PC-3 (cell line): ENCODE measurements at regions of chr17 and their contacts with region 1.

Region 1: DNA sequence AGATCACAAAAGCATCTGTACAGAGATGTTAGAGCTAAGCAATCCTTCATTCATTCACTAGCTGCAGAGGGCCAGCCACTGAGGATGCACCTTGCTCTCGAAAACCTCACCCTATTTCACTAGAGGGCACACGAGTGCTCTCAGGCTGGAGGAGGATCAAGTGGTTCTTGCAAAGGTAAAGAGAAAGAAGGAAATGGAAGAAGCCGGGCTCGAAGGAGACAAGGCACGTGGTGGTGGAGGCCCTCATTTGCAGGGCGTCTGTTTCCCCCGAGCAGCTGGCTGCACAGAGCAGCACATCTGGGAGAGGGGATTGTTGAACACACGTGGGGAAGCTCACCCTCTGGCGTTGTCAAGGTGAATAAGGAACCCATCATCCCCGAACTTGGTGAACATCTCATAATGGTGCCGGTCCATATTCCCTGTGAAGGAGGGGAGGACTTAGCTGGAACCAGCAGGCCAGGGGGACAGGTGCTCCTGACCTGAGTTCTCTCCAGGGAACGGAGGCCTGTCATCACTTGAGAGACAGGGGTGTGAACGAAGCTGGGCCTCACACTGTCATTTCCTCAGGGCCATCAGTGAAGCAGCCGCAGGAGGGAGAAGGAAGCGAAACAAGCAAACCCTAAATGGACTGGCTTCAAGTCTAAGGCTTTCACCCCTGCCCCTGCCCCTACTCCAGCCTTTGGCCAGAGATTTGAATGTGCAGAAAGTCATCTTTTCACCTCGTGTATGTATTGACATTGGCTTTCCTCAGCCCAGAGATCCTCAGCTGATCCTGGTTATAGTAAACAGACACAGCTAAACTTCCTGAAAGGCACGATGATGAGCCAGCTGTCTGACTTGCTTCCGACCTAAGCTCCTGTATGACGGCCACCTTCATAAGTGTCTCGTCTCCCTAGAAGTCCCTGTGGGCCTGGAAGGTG is 27.6 kb downstream of the PRKAR1A start:
- DNase-seq: peak; percentile 19
- ATAC-seq: no peak
- H3K4me3 ChIP-seq: no peak overlapping the region
- H3K27ac ChIP-seq: no peak overlapping the region
- H3K4me1 ChIP-seq: peaks cover 38% of the 10 kb centered on the region
- H3K27me3 ChIP-seq: no peaks in the 10 kb centered on the region
- CTCF ChIP-seq: peak; percentile 52

Region 2: GRCh38 chr17:67121316-67121887 is 1418.4 kb before region 1 on chr17:
- CTCF ChIA-PET with region 1: no interaction called
- POLR2A ChIA-PET with region 1: no interaction called
- intact Hi-C with region 1: no loop called
- DNase-seq: no peak
- ATAC-seq: no peak
- H3K4me3 ChIP-seq: no peak overlapping the region
- H3K27ac ChIP-seq: no peak overlapping the region
- H3K4me1 ChIP-seq: no peaks in the 10 kb centered on the region
- H3K27me3 ChIP-seq: no peaks in the 10 kb centered on the region
- CTCF ChIP-seq: no peak

Region 3: DNA sequence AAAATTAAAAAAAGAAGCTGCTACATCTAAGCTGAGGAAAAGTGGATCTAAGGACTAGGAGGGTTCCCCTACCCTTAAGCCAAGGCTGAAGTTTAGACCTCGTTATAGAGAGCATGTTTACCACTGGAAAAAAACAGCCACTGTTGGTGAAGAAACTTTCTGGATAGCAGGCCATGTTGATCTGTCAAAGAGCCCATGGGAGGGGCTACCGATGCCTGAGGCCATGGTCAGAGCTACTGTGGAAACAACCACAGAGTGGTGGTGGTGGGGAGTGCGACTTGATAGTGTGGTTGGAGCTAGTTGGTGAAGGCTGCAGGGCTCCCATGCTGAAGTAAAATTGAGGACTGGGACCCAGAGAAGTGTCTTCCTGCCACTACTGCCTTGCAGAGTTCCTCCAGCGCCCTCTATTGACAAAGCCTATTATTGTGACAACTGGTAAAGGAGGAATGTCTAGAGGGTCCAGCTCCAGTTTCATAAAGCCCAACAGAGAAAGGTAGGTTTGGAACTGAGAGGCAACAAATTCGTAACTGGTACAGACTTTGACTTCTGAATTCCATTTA is 74.0 kb after region 1 on chr17:
- CTCF ChIA-PET with region 1: interaction called, 4 read pairs
- POLR2A ChIA-PET with region 1: no interaction called
- intact Hi-C with region 1: loop called (anchors 2 kb)
- DNase-seq: peak; percentile 91
- ATAC-seq: peak; percentile 20; the same call in 1 of the 2 replicates
- H3K4me3 ChIP-seq: no peak overlapping the region
- H3K27ac ChIP-seq: no peak overlapping the region
- H3K4me1 ChIP-seq: peaks cover 26% of the 10 kb centered on the region
- H3K27me3 ChIP-seq: no peaks in the 10 kb centered on the region
- CTCF ChIP-seq: peak; percentile 93

Region 4: GRCh38 chr17:68634403-68634802 is 94.6 kb after region 1 on chr17:
- CTCF ChIA-PET with region 1: no interaction called
- POLR2A ChIA-PET with region 1: no interaction called
- intact Hi-C with region 1: loop called (anchors 5 kb)
- DNase-seq: peak; percentile 74
- ATAC-seq: peak; percentile 89
- H3K4me3 ChIP-seq: no peak overlapping the region
- H3K27ac ChIP-seq: peak overlapping the region; percentile 62
- H3K4me1 ChIP-seq: peaks cover 10% of the 10 kb centered on the region
- H3K27me3 ChIP-seq: no peaks in the 10 kb centered on the region
- CTCF ChIP-seq: peak; percentile 70

Region 5: DNA sequence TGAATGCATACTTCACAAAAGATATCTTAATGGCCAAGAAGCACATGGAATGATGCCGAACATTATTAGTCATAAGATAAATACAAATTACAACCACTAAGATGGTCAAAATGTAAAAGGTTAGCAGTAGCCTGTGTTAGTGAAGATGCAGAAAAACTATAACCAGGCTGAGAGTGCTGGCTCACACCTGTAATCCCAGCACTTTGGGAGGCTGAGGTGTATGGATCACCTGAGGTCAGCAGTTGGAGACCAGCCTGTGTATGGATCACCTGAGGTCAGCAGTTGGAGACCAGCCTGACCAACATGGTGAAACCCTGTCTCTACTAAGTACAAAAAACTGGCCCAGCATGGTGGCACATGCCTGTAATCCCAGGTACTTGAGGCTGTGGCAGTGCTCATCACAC is 106.9 kb after region 1 on chr17:
- CTCF ChIA-PET with region 1: no interaction called
- POLR2A ChIA-PET with region 1: no interaction called
- intact Hi-C with region 1: loop called (anchors 2 kb)
- DNase-seq: peak; percentile 88
- ATAC-seq: peak; percentile 81
- H3K4me3 ChIP-seq: no peak overlapping the region
- H3K27ac ChIP-seq: peak overlapping the region; percentile 67
- H3K4me1 ChIP-seq: peaks cover 23% of the 10 kb centered on the region
- H3K27me3 ChIP-seq: 0 out of 2 replicates have a peak, but pooled peaks cover 3% of the 10 kb centered on the region
- CTCF ChIP-seq: no peak

Region 6: DNA sequence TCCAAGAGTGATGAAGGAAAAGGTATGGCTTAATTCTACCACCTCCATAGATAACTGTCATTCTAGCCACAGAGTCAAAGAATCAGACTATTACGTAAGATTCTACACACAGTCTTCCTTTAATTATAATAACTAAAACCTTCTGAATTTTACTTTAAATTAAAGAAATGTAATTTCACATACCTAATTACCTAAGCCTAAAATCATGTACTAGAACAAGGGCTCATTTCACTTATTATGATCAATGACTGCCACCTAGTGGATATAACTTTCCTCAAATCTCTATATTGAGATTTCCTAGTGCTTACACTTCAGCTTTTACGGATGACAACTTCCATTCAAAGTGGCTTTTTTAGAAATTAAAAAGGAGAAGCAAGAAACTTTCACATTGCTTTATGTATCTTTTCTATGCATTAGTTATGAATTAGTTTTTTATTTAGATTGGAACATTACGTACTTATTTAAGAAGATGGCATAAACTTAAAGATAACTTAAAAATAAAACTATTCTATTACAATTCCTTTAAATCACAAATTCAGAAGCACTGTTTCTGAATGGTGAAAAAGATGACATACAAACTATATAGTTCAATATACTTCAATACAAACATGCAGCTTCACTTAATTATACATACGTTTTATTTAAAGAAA is 707.0 kb after region 1 on chr17:
- CTCF ChIA-PET with region 1: no interaction called
- POLR2A ChIA-PET with region 1: no interaction called
- intact Hi-C with region 1: loop called (anchors 10 kb)
- DNase-seq: peak; percentile 81
- ATAC-seq: peak; percentile 70
- H3K4me3 ChIP-seq: no peak overlapping the region
- H3K27ac ChIP-seq: no peak overlapping the region
- H3K4me1 ChIP-seq: no peaks in the 10 kb centered on the region
- H3K27me3 ChIP-seq: no peaks in the 10 kb centered on the region
- CTCF ChIP-seq: peak; percentile 93